Activated T-helper 2 cell treated with anti-CD3 and anti-CD28 coated beads, Interferon-gamma antibody, Interleukin-2, Interleukin-4, amounts not matched to agents 10 μg/mL and 5 μg/mL and 100 μg/mL, durations not matched to agents 14 hours and 24 hours and 36 hours (primary cell): ENCODE measurements at regions of chr12 and their contacts with region 1.

Region 1: DNA sequence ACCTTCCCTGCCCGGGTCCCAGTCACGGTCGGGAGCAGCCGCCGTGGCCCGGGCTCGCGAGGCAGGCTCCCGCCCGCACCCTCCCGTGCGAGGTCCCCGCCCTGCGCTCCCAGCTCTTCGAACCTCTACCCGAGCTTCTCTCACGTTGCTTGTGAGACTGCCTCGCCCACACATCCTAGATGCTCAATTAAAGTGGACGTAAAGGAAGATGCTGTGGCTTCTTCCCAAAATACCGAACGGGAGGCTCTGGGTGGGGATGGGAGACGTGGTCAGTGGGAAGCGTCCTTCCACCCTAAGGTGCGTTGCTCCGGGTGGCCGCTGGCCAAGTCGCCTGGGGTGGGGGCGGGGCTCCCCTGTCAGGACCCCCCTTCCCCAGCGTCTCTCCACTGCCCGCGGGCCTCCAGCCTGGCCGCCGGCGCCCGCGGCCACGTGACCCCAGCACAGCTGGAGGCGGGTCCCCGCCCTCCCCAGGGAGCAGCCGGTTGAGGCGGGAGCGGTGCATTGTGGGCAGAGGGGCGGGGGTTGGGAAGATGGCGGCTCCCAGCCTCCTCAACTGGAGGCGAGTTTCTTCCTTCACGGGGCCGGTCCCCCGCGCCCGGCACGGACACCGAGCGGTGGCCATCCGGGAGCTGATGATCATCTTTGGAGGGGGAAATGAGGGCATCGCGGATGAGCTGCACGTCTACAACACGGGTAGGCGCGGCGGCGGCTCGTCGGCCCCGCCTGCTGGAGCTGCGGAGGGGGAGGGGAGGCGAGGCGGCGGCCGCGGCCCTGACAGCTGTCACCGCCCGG is at the start of gene HCFC2:
- DNase-seq: peak; percentile 85
- H3K4me3 Mint-ChIP-seq: peak within 1 kb of the TSS; percentile 94
- H3K27ac Mint-ChIP-seq: peak within 1 kb of the TSS; percentile 80
- H3K4me1 Mint-ChIP-seq: peaks cover 27% of the 10 kb centered on the region
- H3K27me3 Mint-ChIP-seq: peaks cover 23% of the 10 kb centered on the region
- total RNA-seq, gene HCFC2: 8.7 and 9.1 TPM in 2 replicates

Region 2: DNA sequence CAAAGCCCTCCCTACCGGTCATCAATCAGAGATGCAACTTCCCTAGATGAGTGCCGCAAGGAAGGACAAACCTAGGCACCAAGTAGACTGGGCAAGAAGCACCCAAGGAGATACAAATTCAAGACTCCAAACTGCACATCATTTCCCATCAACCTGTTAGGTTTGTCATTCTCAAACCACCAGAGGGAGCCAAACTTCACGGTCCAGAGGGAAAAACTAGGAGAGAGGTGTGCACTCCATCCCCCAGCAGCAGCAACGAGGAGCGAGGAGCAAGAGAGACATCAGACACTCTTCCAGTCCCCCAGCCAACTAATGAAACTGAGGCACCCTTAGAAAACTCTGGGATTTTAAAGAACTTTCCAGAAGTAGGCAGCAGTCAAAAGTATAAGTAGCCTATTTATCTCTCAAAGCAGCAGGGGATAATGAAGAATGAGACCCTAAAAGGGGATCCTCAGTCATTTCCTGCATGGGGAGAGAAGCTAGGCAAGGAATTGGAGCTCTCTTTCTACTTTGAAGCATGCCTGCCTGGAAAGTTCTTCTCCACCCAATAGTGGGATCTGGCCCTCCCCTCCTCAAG is 186.2 kb before region 1 on chr12:
- intact Hi-C with region 1: loop called (anchors 5 kb)
- DNase-seq: peak; percentile 31
- H3K4me3 Mint-ChIP-seq: no peak overlapping the region
- H3K27ac Mint-ChIP-seq: no peak overlapping the region
- H3K4me1 Mint-ChIP-seq: peaks cover 30% of the 10 kb centered on the region
- H3K27me3 Mint-ChIP-seq: peaks cover 15% of the 10 kb centered on the region

Region 3: GRCh38 chr12:103965590-103966504 is 98.4 kb before region 1 on chr12 and contains the start of gene TDG:
- intact Hi-C with region 1: loop called (anchors 2 kb)
- DNase-seq: peak; percentile 96
- H3K4me3 Mint-ChIP-seq: peak within 1 kb of the TSS; percentile 98
- H3K27ac Mint-ChIP-seq: peak within 1 kb of the TSS; percentile 99
- H3K4me1 Mint-ChIP-seq: peaks cover 28% of the 10 kb centered on the region
- H3K27me3 Mint-ChIP-seq: no peaks in the 10 kb centered on the region
- total RNA-seq, gene TDG: 76.6 and 77.3 TPM in 2 replicates

Region 4: GRCh38 chr12:104083769-104084475 is 19.7 kb after region 1 on chr12:
- intact Hi-C with region 1: loop called (anchors 1 kb)
- DNase-seq: no peak
- H3K4me3 Mint-ChIP-seq: peak overlapping the region; percentile 13
- H3K27ac Mint-ChIP-seq: peak overlapping the region; percentile 65
- H3K4me1 Mint-ChIP-seq: peaks cover 19% of the 10 kb centered on the region
- H3K27me3 Mint-ChIP-seq: no peaks in the 10 kb centered on the region

Region 5: DNA sequence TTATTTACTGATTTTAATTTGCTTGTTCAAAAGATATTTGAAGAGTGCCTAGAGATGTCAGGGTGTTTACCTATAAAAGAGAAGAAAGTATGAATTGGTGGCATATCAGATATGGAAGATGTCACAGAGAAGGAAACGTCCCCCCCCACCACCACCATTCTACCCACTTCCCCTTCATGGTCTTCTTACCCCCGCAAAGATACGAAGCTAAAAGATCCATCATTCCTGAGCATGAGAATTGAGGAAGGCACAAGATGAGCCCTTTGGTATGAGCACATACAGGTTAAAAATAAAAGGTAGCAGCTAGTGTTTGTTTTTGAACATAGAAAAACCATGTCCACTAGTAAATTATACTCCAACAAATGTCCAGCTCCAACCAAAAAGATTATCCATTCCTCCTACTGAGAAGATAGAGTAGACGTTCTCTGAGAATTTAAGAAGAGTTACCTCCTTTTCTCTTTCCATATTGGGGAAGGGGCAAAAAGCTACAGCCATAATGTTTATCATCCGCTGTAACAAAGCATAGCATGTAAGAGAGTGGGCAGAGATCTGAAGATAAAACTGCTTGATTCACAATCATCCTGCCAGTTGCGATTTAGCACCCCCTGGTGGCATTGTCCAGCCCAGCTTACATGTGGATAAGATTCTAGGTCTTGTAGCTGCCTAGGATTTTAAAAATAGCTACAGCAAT is 44.7 kb after region 1 on chr12:
- intact Hi-C with region 1: loop called (anchors 2 kb)
- DNase-seq: peak; percentile 74
- H3K4me3 Mint-ChIP-seq: no peak overlapping the region
- H3K27ac Mint-ChIP-seq: no peak overlapping the region
- H3K4me1 Mint-ChIP-seq: peaks cover 9% of the 10 kb centered on the region
- H3K27me3 Mint-ChIP-seq: no peaks in the 10 kb centered on the region

Region 6: GRCh38 chr12:104137913-104138796 is 73.9 kb after region 1 on chr12 and contains the start of gene NFYB:
- intact Hi-C with region 1: loop called (anchors 2 kb)
- DNase-seq: peak; percentile 91
- H3K4me3 Mint-ChIP-seq: peak within 1 kb of the TSS; percentile 84
- H3K27ac Mint-ChIP-seq: peak within 1 kb of the TSS; percentile 86
- H3K4me1 Mint-ChIP-seq: peaks cover 17% of the 10 kb centered on the region
- H3K27me3 Mint-ChIP-seq: peaks cover 14% of the 10 kb centered on the region
- total RNA-seq, gene NFYB: 29.0 and 30.0 TPM in 2 replicates